Thyroid gland (tissue), 4 donors: ENCODE measurements at regions of chr14 and their contacts with region 1.

Region 1: DNA sequence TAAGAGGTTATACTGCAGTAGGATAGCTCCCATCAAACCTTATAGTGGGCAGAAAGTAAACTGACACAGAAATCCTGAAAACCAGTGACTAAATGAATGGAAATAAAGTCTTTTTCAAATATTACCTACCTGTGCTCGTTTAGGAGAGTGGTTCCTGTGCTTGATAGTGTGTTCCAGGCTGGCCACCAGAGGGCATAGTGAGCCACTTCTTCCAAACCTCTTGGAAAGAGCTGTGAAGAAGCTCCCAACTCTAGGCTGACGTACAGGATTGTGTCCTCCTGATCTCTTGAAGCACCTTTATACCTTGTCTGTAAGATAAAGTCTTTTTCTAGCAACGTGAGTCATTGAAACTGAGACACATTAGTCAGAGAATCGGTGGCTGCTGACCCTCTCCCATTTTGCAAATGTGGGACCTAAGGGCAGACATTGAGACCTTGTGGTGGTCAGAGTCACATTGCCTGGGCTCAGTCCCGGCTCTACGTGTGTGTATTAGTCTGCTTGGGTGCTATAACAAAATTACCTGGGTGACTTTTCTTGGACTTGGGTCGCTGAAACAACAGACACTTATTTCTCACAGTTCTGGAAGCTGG is 17.6 kb downstream of the TDP1 start:
- DNase-seq: peak; percentile 72 to 80
- H3K4me3 ChIP-seq: no peak overlapping the region
- H3K27ac ChIP-seq: no peak overlapping the region
- H3K4me1 ChIP-seq: no peaks in the 10 kb centered on the region
- H3K27me3 ChIP-seq: no peaks in the 10 kb centered on the region
- CTCF ChIP-seq: peak; percentile 50 to 90 (median 81)
- POLR2A ChIP-seq: no peak

Region 2: DNA sequence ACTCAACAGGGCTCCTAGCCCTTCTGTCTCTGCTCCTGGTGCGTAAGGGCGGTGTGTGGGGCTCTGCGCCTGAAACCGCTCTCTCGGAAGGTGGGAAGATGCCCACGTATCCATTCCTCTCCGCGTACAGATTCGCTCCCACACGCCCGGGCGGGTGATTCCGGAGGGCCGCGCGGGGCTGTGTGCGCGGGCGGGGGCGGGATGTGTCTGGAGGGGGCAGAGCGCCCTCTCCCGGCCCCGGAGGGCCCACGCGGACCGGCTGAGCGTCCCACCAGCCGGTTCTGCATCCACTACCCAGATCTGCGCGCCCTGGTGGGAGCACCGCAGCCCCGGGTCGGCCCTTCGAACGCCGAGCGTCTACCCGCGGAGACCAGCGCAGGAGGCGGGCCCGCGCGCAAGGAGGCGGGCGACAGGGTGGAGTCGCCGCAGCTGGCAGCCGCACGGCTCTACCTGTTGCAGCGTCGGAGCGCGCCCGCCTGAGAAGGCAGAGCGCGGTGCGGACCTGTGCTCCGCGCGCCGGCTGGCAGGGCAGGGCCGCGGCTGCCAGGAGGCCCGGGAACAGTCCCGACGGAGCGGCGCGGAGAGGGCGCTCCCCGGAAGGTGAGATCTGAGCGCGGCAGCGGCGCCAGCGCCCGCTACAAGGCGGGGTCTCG is 87.1 kb after region 1 on chr14:
- intact Hi-C with region 1: loop called (anchors 10 kb)
- DNase-seq: peak; percentile 76 to 79
- H3K4me3 ChIP-seq: peak overlapping the region; percentile 13 to 41 (median 39)
- H3K27ac ChIP-seq: peak overlapping the region in 2 of 3 donors; percentile 13 to 26
- H3K4me1 ChIP-seq: peaks cover 7 to 29% of the 10 kb centered on the region in 2 donors
- H3K27me3 ChIP-seq: no peaks in the 10 kb centered on the region
- CTCF ChIP-seq: peak in 5 of 6 experiments; percentile 28 to 69 (median 57)
- POLR2A ChIP-seq: peak in 1 of 2 donors; percentile 85

Region 3: DNA sequence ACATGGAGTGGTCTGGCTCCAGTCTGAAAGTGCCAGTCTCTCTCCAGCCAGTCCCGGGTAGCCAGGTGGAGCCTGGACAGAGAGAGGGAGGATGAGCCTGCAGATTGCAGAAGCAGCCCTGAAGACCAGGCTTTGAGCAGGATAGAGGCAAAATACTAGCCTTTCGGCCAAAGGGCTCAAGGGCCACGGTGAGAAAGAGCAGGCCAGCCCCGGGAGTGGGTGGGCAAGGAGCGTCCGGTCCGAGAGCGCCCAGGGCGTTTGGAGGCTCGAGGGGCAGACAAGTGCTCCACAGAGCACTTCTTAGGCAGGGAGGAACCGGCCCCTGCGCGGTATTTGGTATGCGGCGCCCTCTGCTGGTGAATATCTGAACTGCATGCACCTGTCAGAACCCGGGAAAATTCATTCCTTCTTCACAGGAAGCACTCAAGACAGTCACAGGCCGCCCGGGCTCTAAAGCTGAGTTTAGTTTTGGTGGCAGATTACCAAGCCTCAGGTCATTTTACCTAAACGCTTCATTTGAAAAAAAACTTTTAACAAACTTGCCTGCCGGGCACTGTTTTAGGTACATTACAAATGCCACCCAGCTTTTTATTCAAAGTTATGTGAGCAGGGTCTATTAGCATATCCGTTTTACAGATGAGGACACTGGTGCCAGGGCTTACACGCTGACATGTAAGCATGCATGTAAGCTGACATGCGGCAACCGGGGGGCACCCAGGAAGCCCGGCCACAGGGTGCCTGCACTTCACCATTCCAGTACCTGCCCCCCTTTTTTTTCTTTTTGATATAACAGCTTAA is 262.0 kb after region 1 on chr14:
- intact Hi-C with region 1: loop called (anchors 5 kb)
- DNase-seq: peak; percentile 76 to 79
- H3K4me3 ChIP-seq: no peak overlapping the region
- H3K27ac ChIP-seq: no peak overlapping the region
- H3K4me1 ChIP-seq: no peaks in the 10 kb centered on the region
- H3K27me3 ChIP-seq: no peaks in the 10 kb centered on the region
- CTCF ChIP-seq: peak; percentile 89 to 99 (median 96)
- POLR2A ChIP-seq: no peak

Region 4: GRCh38 chr14:90256354-90257131 is 283.2 kb after region 1 on chr14 and contains the start of gene PSMC1:
- intact Hi-C with region 1: no loop called
- DNase-seq: peak; percentile 92 to 93
- H3K4me3 ChIP-seq: peak within 1 kb of the TSS; percentile 74 to 98 (median 97)
- H3K27ac ChIP-seq: peak within 1 kb of the TSS; percentile 71 to 87 (median 83)
- H3K4me1 ChIP-seq: peaks cover 10 to 17% of the 10 kb centered on the region in 2 donors
- H3K27me3 ChIP-seq: no peaks in the 10 kb centered on the region
- CTCF ChIP-seq: peak in 2 of 6 experiments; percentile 17 to 20
- POLR2A ChIP-seq: peak; percentile 2 to 56
- total RNA-seq, gene PSMC1: 86.8 to 163 (median 133) TPM